ENCODE measurements at regions of chr21 and their contacts with region 1.

Region 1: GRCh38 chr21:33441489-33442477 is 38.0 kb downstream of the TMEM50B start:
- DNase-seq: peak in 4 of 5 donors; percentile 70 to 80 (median 78)
- ATAC-seq: peak; percentile 59 to 80 (median 75)
- H3K4me3 ChIP-seq: no peak overlapping the region
- H3K27ac ChIP-seq: peak overlapping the region in 11 of 12 donors; percentile 21 to 71 (median 51)
- H3K4me1 ChIP-seq: peaks cover 0 to 26% (median 13%) of the 10 kb centered on the region in 12 donors
- H3K27me3 ChIP-seq: no peaks in the 10 kb centered on the region
- CTCF ChIP-seq: no peak
- POLR2A ChIP-seq: no peak

Region 2: DNA sequence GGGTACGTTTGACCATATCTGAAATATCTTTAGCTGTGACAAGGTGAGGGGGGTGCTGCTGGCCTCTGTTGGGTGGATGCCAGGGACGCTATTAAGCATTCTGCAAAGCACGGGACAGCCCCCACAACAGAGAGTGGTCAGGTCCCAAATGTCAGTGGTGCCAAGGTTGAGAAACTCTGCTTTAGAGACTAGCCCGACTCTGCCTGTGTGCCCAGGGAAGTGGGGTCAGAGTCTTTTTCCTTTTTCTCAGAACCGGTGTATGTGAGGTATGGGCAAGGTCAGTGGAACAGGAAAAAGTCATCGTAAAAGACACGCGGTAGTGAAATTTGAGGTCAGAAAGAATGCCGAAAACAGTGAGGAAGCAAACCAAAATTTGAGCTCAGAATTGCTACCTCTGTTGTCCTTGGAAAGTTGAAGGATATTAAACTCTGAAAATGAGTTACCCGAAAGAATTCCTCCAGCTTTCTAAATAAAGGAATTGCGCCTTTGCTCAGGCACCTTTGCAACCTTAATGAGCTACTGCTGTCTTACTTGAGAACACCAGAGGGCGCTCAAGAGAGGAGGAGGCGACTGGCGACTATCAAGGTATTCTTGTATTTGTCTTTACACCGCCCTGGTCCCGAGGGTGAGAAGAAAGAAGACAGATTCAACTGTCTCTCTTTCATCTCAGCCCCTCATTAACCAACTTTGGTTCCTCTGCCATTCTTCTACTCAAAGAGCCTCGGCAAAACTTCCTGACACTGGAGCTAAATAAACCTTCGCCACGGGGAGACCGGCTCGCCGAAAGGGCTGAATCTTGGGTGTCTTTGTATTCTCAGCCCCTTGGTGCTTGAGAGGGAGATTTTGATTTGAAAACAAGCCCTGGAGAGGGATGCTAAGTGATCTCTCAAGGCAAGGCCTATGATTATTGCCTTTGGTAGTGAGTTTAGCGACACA is 501.4 kb before region 1 on chr21:
- intact Hi-C with region 1: loop called in 1 of 10 experiments (anchors 10 kb)
- DNase-seq: peak in 3 of 5 donors; percentile 27 to 35 (median 32)
- ATAC-seq: peak in 1 of 4 donors; percentile 70
- H3K4me3 ChIP-seq: no peak overlapping the region
- H3K27ac ChIP-seq: no peak overlapping the region
- H3K4me1 ChIP-seq: no peaks in the 10 kb centered on the region
- H3K27me3 ChIP-seq: peaks cover 0 to 3% (median 0%) of the 10 kb centered on the region in 9 donors
- CTCF ChIP-seq: peak; percentile 64 to 84 (median 76)
- POLR2A ChIP-seq: no peak

Region 3: DNA sequence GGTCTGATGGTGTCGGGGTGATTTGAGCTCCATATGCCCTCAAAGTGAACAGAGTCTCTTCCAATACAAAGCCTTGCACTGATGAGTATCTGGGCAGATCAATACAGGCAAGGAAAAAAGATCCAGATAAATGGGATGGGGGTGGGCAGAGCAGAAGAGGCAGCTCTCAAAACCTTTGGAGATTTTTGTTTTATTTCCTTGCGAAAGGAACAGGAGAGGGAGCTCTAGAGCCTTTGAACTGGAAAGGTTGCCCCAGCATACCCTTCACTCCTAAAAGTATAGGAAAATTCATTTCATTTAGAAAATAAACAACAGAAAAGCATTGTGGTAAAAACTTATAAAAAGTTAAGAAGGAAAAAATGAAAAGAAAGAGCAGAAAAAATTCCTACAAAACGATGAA is 447.5 kb before region 1 on chr21:
- intact Hi-C with region 1: loop called in 1 of 10 experiments (anchors 10 kb)
- DNase-seq: no peak
- ATAC-seq: no peak
- H3K4me3 ChIP-seq: no peak overlapping the region
- H3K27ac ChIP-seq: no peak overlapping the region
- H3K4me1 ChIP-seq: no peaks in the 10 kb centered on the region
- H3K27me3 ChIP-seq: peaks cover 0 to 33% (median 2%) of the 10 kb centered on the region in 9 donors
- CTCF ChIP-seq: peak in 9 of 12 donors; percentile 24 to 46 (median 38)
- POLR2A ChIP-seq: no peak

Region 4: GRCh38 chr21:33360881-33361602 is 80.7 kb before region 1 on chr21:
- intact Hi-C with region 1: loop called in 4 of 10 experiments (anchors 2 to 10 kb)
- DNase-seq: peak; percentile 74 to 86 (median 77)
- ATAC-seq: peak; percentile 74 to 86 (median 80)
- H3K4me3 ChIP-seq: peak overlapping the region in 11 of 12 donors; percentile 16 to 55 (median 36)
- H3K27ac ChIP-seq: peak overlapping the region in 11 of 12 donors; percentile 34 to 90 (median 58)
- H3K4me1 ChIP-seq: peaks cover 0 to 39% (median 20%) of the 10 kb centered on the region in 12 donors
- H3K27me3 ChIP-seq: no peaks in the 10 kb centered on the region
- CTCF ChIP-seq: peak; percentile 71 to 88 (median 82)
- POLR2A ChIP-seq: no peak

Region 5: GRCh38 chr21:33374450-33375096 is 67.2 kb before region 1 on chr21:
- intact Hi-C with region 1: loop called in 3 of 10 experiments (anchors 10 kb)
- DNase-seq: peak in 3 of 5 donors; percentile 54 to 58 (median 57)
- ATAC-seq: peak; percentile 70 to 78 (median 75)
- H3K4me3 ChIP-seq: no peak overlapping the region
- H3K27ac ChIP-seq: peak overlapping the region in 5 of 12 donors; percentile 11 to 91 (median 34)
- H3K4me1 ChIP-seq: peaks cover 0 to 50% (median 5%) of the 10 kb centered on the region in 12 donors
- H3K27me3 ChIP-seq: no peaks in the 10 kb centered on the region
- CTCF ChIP-seq: peak; percentile 41 to 80 (median 67)
- POLR2A ChIP-seq: no peak

Region 6: GRCh38 chr21:33539612-33540011 is 97.8 kb after region 1 on chr21:
- intact Hi-C with region 1: no loop called
- DNase-seq: no peak
- ATAC-seq: no peak
- H3K4me3 ChIP-seq: no peak overlapping the region
- H3K27ac ChIP-seq: no peak overlapping the region
- H3K4me1 ChIP-seq: peaks cover 0 to 22% (median 16%) of the 10 kb centered on the region in 12 donors
- H3K27me3 ChIP-seq: no peaks in the 10 kb centered on the region
- CTCF ChIP-seq: no peak
- POLR2A ChIP-seq: no peak